ENCODE measurements at regions of chr19 and their contacts with region 1.

Region 1: GRCh38 chr19:53879140-53880081 is 2.6 kb upstream of the PRKCG start:
- DNase-seq: peak; percentile 91
- ATAC-seq: peak; percentile 91
- H3K4me3 Mint-ChIP-seq: no peak overlapping the region
- H3K27ac Mint-ChIP-seq: peak overlapping the region; percentile 9
- H3K4me1 Mint-ChIP-seq: peaks cover 50% of the 10 kb centered on the region
- H3K27me3 Mint-ChIP-seq: peaks cover 11% of the 10 kb centered on the region

Region 2: DNA sequence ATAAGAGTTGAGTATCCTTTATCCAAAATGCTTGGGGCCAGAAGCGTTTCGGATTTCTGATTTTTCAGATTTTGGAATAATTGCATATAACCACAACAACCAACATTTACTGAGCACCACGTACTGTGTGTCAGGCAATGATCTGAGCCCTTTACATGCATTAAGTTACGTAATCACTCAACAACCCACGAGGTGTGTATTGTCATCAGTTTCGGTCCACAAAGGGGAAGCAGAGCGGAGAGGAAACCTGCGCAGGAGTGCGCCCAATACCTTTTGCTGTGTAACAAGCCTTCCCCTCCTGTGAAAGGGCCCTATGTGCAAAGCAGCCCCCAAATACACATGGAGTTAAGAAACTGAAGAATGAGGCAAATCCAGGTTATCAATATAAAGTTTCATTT is 34.6 kb before region 1 on chr19:
- CTCF ChIA-PET with region 1: no interaction called
- POLR2A ChIA-PET with region 1: no interaction called
- intact Hi-C with region 1: loop called in 1 of 2 experiments (anchors 1 kb)
- DNase-seq: no peak
- ATAC-seq: no peak
- H3K4me3 Mint-ChIP-seq: no peak overlapping the region
- H3K27ac Mint-ChIP-seq: no peak overlapping the region
- H3K4me1 Mint-ChIP-seq: peaks cover 5% of the 10 kb centered on the region
- H3K27me3 Mint-ChIP-seq: peaks cover 17% of the 10 kb centered on the region

Region 3: DNA sequence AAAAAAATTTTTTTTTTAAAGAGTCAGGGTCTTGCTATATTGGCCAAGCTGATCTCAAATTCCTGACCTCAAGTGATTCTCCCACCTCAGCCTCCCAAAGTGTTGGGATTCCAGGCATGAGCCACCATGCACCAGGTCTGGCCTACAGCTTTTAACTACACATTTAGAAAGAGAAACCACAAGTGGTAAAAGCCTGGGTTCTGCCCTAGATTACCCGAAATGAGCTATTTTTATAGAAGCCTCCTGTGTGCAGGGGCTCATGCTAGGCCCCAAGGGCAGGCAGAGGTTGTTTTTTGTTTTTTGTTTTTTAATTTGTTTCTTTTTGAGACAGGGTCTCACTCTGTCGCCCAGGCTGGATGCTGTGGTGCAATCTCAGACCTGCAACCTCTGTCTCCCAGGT is 25.7 kb before region 1 on chr19:
- CTCF ChIA-PET with region 1: no interaction called
- POLR2A ChIA-PET with region 1: no interaction called
- intact Hi-C with region 1: loop called (anchors 1 to 2 kb)
- DNase-seq: no peak
- ATAC-seq: peak; percentile 49
- H3K4me3 Mint-ChIP-seq: no peak overlapping the region
- H3K27ac Mint-ChIP-seq: no peak overlapping the region
- H3K4me1 Mint-ChIP-seq: peaks cover 4% of the 10 kb centered on the region
- H3K27me3 Mint-ChIP-seq: peaks cover 15% of the 10 kb centered on the region

Region 4: GRCh38 chr19:53900191-53900860 is 20.9 kb after region 1 on chr19:
- CTCF ChIA-PET with region 1: no interaction called
- POLR2A ChIA-PET with region 1: no interaction called
- intact Hi-C with region 1: no loop called
- DNase-seq: no peak
- ATAC-seq: no peak
- H3K4me3 Mint-ChIP-seq: no peak overlapping the region
- H3K27ac Mint-ChIP-seq: no peak overlapping the region
- H3K4me1 Mint-ChIP-seq: peaks cover 8% of the 10 kb centered on the region
- H3K27me3 Mint-ChIP-seq: peaks cover 48% of the 10 kb centered on the region